Naive thymus-derived CD4-positive, alpha-beta T cell (primary cell): ENCODE measurements at regions of chr1 and their contacts with region 1.

Region 1: DNA sequence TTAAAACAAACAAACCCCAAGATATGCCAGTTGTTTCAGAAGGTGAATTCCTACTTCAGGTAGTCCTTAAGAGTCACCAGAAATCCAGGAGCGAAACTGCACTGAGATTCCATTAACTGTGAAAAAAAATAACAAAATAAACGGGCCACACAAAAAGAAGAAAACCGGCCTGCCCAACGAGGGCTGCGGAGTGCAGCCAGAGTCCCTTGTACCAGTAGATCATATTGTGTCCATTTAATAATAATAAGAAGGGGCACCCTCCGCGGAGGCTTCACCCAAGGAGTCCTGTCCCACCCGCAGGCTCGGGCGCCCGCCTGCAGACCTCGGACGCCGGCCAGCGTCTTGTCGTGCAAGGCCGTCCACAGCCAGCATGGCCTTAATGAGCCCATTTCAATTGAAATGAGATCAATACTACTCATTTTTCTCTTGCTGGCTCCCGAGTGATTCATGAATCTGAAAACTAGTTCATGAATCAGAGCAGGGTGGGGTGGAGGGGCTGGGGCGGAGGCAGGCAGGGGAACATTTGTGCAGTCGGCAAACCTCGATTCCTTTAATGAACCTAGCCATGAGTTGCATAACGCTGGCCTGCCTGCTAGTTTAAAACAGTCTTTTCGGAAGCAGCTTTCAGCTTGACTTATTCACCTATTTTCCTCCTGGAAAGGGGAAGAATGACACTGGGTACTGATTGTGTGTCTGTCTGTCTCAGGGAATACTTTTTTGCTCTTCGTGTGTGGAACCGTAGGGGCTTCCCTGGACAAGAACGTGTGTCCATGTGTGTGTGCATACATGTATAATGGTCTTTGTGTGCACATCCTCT is 113.1 kb upstream of the IRF2BP2 start:
- DNase-seq: peak in 2 of 9 donors; percentile 51 to 68
- ATAC-seq: peak; percentile 12
- H3K4me3 ChIP-seq: peak overlapping the region; percentile 52
- H3K4me3 Mint-ChIP-seq: peak overlapping the region; percentile 51 to 85 (median 82)
- H3K27ac ChIP-seq: peak overlapping the region; percentile 95
- H3K27ac Mint-ChIP-seq: peak overlapping the region; percentile 87 to 99 (median 98)
- H3K4me1 ChIP-seq: peaks cover 39 to 46% of the 10 kb centered on the region in 2 donors
- H3K4me1 Mint-ChIP-seq: peaks cover 46 to 95% (median 84%) of the 10 kb centered on the region in 7 donors
- H3K27me3 ChIP-seq: no peaks in the 10 kb centered on the region
- H3K27me3 Mint-ChIP-seq: no peaks in the 10 kb centered on the region

Region 2: DNA sequence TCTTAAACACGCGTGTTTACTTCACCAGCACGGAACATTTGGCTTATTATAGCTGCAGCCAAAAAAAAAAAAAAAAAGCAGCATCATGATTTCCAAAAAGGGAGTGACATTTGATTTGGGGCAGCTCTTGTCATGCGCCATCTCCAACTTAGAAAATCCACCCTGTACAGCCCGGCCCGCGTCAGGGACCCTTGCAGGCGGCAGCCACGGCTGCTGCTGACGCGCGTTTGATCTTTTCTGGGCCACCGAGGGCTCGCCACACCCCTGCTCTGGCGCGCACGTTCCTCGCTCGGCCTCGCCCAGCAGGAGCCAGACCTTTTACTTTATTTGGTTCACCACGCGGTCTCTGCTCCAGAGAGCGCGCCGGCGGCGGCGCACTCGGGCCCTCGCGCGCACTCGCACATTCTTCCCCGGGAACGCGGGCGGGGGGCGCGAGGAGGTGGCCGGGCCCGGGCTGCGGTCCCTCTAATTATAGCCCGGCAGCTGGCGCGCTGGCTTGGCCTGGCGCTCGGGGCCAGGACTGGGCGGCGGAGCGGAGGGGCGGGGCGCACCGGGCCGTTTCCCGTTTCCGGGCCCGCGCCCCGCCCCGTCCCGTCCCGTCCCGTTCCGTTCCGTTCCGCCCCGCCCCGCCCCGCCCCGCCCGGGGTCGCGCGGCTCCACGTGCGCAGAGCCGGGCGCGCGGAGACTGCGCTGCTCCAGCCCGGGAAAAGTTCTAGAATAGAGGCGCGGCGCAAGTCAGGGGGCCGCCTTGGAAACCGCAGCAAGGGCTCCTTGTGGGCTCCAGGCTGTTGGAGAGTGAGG is 123.3 kb before region 1 on chr1:
- CTCF ChIA-PET with region 1: interaction called, 7 read pairs
- POLR2A ChIA-PET with region 1: interaction called, 24 read pairs
- intact Hi-C with region 1: loop called in 1 of 2 experiments (anchors 1 kb)
- DNase-seq: peak; percentile 52 to 88 (median 62)
- ATAC-seq: peak; percentile 74
- H3K4me3 ChIP-seq: peak overlapping the region; percentile 61
- H3K4me3 Mint-ChIP-seq: peak overlapping the region; percentile 75 to 97 (median 89)
- H3K27ac ChIP-seq: peak overlapping the region; percentile 96
- H3K27ac Mint-ChIP-seq: peak overlapping the region; percentile 87 to 99 (median 95)
- H3K4me1 ChIP-seq: peaks cover 51 to 54% of the 10 kb centered on the region in 2 donors
- H3K4me1 Mint-ChIP-seq: peaks cover 24 to 68% (median 56%) of the 10 kb centered on the region in 7 donors
- H3K27me3 ChIP-seq: no peaks in the 10 kb centered on the region
- H3K27me3 Mint-ChIP-seq: no peaks in the 10 kb centered on the region

Region 3: DNA sequence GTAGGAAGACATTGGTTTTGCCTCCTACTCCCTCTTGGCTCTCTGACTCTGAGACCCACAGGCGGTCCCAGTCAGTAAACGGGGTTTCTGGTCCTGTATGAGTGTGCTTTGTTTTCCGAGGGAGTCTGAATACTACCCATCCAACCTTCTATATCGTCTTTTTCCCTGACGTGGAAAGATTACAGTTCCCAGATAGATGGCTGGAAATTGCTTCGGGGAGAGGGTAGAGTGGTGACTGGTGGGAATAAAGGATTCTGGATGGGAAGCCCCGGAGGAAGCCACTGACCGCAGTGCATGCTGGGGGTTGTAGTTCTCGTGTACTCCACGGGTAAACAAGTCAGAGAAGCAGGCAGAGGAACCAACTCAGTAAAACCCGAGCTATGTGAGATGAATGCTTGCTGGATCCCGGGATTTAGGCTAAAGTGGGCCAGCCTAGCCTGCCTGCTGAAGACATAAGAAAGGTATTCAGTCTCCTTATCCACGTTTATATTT is 47.0 kb before region 1 on chr1:
- CTCF ChIA-PET with region 1: interaction called, 4 read pairs
- POLR2A ChIA-PET with region 1: no interaction called
- intact Hi-C with region 1: loop called in 1 of 2 experiments (anchors 2 kb)
- DNase-seq: peak in 8 of 9 donors; percentile 18 to 57 (median 44)
- ATAC-seq: peak; percentile 84
- H3K4me3 ChIP-seq: peak overlapping the region; percentile 47
- H3K4me3 Mint-ChIP-seq: peak overlapping the region; percentile 52 to 89 (median 83)
- H3K27ac ChIP-seq: peak overlapping the region; percentile 37
- H3K27ac Mint-ChIP-seq: peak overlapping the region; percentile 25 to 85 (median 66)
- H3K4me1 ChIP-seq: no peaks in the 10 kb centered on the region
- H3K4me1 Mint-ChIP-seq: peaks cover 6 to 13% (median 12%) of the 10 kb centered on the region in 7 donors
- H3K27me3 ChIP-seq: no peaks in the 10 kb centered on the region
- H3K27me3 Mint-ChIP-seq: peaks cover 0 to 2% (median 0%) of the 10 kb centered on the region in 5 donors

Region 4: GRCh38 chr1:234772345-234773147 is 49.4 kb after region 1 on chr1:
- CTCF ChIA-PET with region 1: no interaction called
- POLR2A ChIA-PET with region 1: interaction called, 26 read pairs
- intact Hi-C with region 1: loop called (anchors 1 kb)
- DNase-seq: peak; percentile 42 to 88 (median 64)
- ATAC-seq: peak; percentile 88
- H3K4me3 ChIP-seq: peak overlapping the region; percentile 7
- H3K4me3 Mint-ChIP-seq: peak overlapping the region; percentile 55 to 83 (median 74)
- H3K27ac ChIP-seq: peak overlapping the region; percentile 64
- H3K27ac Mint-ChIP-seq: peak overlapping the region; percentile 79 to 95 (median 90)
- H3K4me1 ChIP-seq: peaks cover 14 to 53% of the 10 kb centered on the region in 2 donors
- H3K4me1 Mint-ChIP-seq: peaks cover 39 to 69% (median 54%) of the 10 kb centered on the region in 7 donors
- H3K27me3 ChIP-seq: no peaks in the 10 kb centered on the region
- H3K27me3 Mint-ChIP-seq: no peaks in the 10 kb centered on the region

Region 5: DNA sequence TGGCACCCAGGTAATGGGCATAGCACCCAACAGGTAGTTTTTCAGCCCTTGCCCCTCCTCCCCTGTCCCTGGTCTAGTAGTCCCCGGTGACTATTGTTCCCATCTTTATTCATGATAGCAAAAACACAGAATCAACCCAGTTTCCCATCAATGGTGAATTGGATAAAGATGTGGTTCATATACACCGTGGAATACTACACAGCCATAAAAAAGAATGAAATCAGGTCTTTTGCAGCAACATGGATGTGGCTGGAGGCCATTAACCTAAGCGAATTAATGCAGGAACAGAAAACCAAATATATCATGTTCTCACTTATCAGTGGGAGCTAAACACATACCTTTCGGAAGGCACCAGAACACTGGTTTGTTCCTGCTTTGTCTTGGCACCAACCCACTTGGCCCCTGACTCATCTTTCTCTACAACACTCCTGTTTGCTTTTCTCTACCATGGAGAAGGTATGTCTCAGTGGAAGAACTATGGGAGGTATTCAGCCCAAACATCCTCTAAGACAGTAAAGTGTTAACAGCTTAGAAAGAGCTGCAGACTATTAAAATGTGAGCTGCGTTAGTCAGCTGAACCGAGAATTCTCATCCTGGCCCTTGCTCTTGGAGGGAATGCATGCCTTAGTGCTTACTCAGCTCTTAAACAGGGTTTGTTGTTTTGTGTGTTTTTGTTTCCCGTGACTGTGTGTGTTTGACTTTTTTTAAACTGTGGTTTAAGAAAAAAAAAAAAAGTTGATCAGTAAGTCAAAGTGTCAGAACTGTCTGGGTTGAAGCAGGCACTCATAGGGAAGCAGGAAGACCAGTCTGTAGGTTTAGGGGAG is 202.5 kb after region 1 on chr1:
- CTCF ChIA-PET with region 1: no interaction called
- POLR2A ChIA-PET with region 1: interaction called, 3 read pairs
- intact Hi-C with region 1: loop called in 1 of 2 experiments (anchors 1 kb)
- DNase-seq: peak in 3 of 9 donors; percentile 25 to 35 (median 30)
- ATAC-seq: peak; percentile 50
- H3K4me3 ChIP-seq: no peak overlapping the region
- H3K4me3 Mint-ChIP-seq: peak overlapping the region; percentile 45 to 80 (median 66)
- H3K27ac ChIP-seq: no peak overlapping the region
- H3K27ac Mint-ChIP-seq: peak overlapping the region; percentile 80 to 93 (median 83)
- H3K4me1 ChIP-seq: peaks cover 26 to 47% of the 10 kb centered on the region in 2 donors
- H3K4me1 Mint-ChIP-seq: peaks cover 37 to 60% (median 55%) of the 10 kb centered on the region in 7 donors
- H3K27me3 ChIP-seq: no peaks in the 10 kb centered on the region
- H3K27me3 Mint-ChIP-seq: no peaks in the 10 kb centered on the region

Region 6: GRCh38 chr1:235648954-235649367 is 925.8 kb after region 1 on chr1:
- CTCF ChIA-PET with region 1: no interaction called
- POLR2A ChIA-PET with region 1: no interaction called
- intact Hi-C with region 1: loop called in 1 of 2 experiments (anchors 10 kb)
- DNase-seq: peak; percentile 18 to 70 (median 47)
- ATAC-seq: peak; percentile 84
- H3K4me3 ChIP-seq: peak overlapping the region; percentile 50
- H3K4me3 Mint-ChIP-seq: peak overlapping the region; percentile 58 to 90 (median 84)
- H3K27ac ChIP-seq: no peak overlapping the region
- H3K27ac Mint-ChIP-seq: peak overlapping the region in 3 of 9 donors; percentile 40 to 84 (median 73)
- H3K4me1 ChIP-seq: peaks cover 0 to 4% of the 10 kb centered on the region in 2 donors
- H3K4me1 Mint-ChIP-seq: peaks cover 11 to 33% (median 15%) of the 10 kb centered on the region in 7 donors
- H3K27me3 ChIP-seq: peaks cover 0 to 8% of the 10 kb centered on the region in 2 donors
- H3K27me3 Mint-ChIP-seq: peaks cover 60 to 74% (median 68%) of the 10 kb centered on the region in 5 donors